ENCODE measurements at regions of chr17 and their contacts with region 1.

Region 1: GRCh38 chr17:77957857-77958715 is at the start of gene TNRC6C:
- DNase-seq: peak; percentile 100
- ATAC-seq: peak; percentile 92
- H3K4me3 Mint-ChIP-seq: peak within 1 kb of the TSS; percentile 92
- H3K27ac Mint-ChIP-seq: peak within 1 kb of the TSS; percentile 95
- H3K4me1 Mint-ChIP-seq: peaks cover 34% of the 10 kb centered on the region
- H3K27me3 Mint-ChIP-seq: peaks cover 4% of the 10 kb centered on the region
- total RNA-seq, gene TNRC6C: 19.6 to 20.3 TPM

Region 2: DNA sequence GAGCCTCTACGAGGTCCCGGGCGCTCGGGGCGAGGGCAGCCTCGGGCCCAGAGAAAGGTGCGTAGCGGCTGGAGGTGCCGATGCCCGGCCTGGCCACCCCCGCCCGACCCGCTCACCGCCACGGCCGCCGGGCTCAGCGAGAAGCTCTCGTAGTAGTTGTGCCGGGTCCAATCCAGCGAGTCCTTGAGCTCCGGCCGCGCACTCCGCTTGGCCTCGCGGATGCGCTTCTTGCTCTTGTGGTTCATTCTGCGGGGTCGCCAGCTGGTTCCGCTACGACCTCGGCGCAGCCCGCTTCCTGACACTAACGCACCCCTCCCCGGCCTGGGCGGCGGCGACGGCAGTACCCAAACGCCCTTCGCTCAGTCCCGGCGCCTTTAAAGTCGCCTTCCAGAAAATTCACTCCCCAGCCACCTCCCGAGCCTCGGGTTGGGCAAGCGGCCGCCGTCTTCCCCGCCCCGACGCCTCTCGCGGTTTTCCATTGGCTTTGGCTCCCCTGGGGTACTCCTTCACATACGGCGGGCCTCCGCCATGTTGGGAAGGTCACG is 1231.8 kb before region 1 on chr17 and contains the start of gene JMJD6:
- CTCF ChIA-PET with region 1: no interaction called
- POLR2A ChIA-PET with region 1: no interaction called
- intact Hi-C with region 1: loop called in 1 of 2 experiments (anchors 2 kb)
- DNase-seq: peak; percentile 97
- ATAC-seq: peak; percentile 87
- H3K4me3 Mint-ChIP-seq: peak within 1 kb of the TSS; percentile 97
- H3K27ac Mint-ChIP-seq: peak within 1 kb of the TSS; percentile 98
- H3K4me1 Mint-ChIP-seq: peaks cover 54% of the 10 kb centered on the region
- H3K27me3 Mint-ChIP-seq: no peaks in the 10 kb centered on the region
- total RNA-seq, gene JMJD6: 51.3 to 65.5 TPM

Region 3: DNA sequence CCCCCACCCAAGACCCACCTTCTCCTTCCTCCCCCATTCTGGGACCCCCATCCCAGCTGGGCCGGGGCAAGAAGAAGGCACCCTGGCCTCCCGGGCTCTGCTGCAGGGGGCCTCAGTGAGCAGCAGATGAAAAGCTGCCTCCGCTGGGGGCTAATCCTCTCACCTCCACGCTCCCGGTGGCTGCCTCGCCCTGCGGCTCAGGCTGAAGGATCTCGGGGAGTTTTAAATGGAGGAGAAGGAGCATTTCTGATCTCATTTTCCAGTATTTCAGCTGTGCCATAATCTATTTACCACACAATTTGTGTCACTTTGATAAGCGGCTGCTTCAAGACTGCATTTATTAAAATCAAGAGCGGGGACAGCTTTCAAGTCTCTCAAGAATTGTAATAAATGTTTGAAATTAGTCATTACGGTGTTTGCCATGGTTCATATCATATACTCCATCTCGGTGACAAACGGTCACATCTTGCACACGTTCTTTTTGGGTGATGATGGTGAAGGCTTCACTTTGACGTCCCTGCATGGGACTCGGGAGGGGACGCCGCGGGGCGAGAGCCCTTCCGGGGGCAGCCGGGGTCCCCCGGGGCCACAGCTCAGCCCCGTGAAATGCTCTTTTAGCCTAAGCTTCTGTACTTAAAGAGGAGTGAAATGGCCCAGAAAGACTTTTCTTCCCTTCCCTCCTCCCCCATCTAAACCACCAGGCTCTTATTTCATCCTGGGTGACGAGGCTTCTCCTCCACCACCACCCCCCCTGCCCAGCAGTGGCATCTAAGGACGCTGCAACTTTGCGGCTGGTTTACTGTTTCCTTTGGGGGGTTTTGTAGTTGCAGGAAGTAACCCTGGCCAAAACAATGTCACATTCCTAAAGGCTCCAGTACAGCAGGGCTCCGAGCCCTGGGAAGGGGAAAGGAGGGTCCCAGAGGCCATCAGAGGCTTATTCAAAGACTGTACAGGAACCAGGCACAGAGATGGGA is 312.7 kb before region 1 on chr17:
- CTCF ChIA-PET with region 1: no interaction called
- POLR2A ChIA-PET with region 1: interaction called, 3 read pairs
- intact Hi-C with region 1: loop called in 1 of 2 experiments (anchors 1 kb)
- DNase-seq: peak; percentile 81
- ATAC-seq: peak; percentile 85
- H3K4me3 Mint-ChIP-seq: peak overlapping the region; percentile 59
- H3K27ac Mint-ChIP-seq: peak overlapping the region; percentile 92
- H3K4me1 Mint-ChIP-seq: peaks cover 20% of the 10 kb centered on the region
- H3K27me3 Mint-ChIP-seq: peaks cover 4% of the 10 kb centered on the region

Region 4: GRCh38 chr17:77834170-77835115 is 123.6 kb before region 1 on chr17:
- CTCF ChIA-PET with region 1: no interaction called
- POLR2A ChIA-PET with region 1: interaction called, 5 read pairs
- intact Hi-C with region 1: loop called in 1 of 2 experiments (anchors 1 kb)
- DNase-seq: peak; percentile 88
- ATAC-seq: peak; percentile 79
- H3K4me3 Mint-ChIP-seq: no peak overlapping the region
- H3K27ac Mint-ChIP-seq: peak overlapping the region; percentile 3
- H3K4me1 Mint-ChIP-seq: peaks cover 51% of the 10 kb centered on the region
- H3K27me3 Mint-ChIP-seq: peaks cover 3% of the 10 kb centered on the region

Region 5: DNA sequence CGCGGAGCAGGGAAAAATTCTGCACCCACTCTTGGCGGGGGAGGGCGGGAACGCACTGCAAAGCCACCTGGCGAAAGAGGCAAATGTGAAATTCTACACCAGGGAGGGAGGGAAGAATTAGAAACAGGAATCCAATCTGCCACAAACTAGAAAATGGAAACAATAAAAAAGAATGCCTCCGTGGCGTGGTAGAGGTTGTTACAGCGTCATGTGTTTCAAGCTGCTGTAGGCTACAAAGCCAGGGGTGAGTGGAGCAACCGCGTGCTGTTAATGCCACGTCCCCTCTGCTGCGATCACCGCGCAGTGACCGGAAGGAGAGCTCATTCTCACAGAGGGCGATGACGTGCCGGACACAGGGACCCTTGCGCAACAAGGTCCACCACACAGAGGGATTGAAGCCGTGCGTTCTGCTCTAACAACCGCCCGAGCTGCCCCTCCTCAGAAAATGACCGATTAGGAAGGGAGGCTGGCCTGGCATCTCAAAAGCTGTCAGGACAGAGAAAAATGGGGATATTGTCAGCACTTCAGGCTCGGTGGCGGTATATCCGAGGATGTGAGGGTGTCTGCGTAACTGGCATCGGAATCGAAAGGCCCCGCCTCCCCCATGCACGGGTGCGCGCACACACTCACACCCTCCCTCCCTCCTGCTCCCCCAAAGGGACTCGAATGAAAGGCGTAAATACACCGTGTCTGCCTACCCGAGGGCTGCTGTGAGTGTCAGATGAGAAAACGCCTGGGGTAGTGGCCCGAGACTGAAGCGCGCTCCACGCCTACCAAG is 70.4 kb before region 1 on chr17:
- CTCF ChIA-PET with region 1: interaction called, 3 read pairs
- POLR2A ChIA-PET with region 1: interaction called, 4 read pairs
- intact Hi-C with region 1: loop called (anchors 1 to 2 kb)
- DNase-seq: peak; percentile 78
- ATAC-seq: peak; percentile 82
- H3K4me3 Mint-ChIP-seq: peak overlapping the region; percentile 70
- H3K27ac Mint-ChIP-seq: peak overlapping the region; percentile 40
- H3K4me1 Mint-ChIP-seq: peaks cover 49% of the 10 kb centered on the region
- H3K27me3 Mint-ChIP-seq: peaks cover 3% of the 10 kb centered on the region

Region 6: DNA sequence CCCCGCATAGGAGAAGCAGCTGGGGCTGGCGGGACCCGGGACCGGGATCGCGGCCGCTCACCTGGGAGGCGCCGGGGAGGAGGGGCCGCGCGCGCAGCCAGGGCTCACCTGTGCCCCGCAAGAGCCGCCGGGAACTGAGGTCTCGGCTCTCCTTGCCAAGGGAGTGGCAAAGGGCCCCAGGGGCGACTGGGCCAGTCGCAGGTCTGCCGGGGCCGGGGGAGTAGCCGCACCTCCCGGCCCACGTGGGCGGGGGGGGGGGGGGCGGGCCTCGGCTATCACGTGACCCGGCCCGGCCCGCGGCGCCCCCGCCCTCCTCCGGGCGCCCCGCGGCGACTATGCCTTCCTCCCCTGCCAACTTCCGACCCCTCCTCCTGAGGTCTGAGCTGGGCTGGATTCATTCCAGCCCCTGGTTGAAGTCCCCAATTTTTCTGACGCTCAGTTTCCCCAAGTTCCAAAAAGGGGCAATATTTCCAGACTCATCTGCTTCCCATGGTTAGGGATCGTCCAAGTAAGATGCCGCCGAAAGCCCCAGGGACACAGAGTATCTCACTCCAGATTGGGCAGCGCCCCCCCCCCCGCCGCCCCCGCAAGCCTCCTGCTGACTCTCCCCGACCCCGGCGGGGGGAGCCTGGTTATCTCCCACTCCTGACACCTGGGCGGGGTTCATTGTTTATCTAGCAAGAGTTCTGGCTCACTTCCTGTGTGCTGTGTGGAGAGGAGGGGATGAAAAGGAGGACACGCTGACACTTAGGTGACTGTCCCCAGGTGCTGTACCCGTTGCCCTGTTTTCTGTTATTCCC is 170.7 kb after region 1 on chr17 and contains the start of gene TMC6:
- CTCF ChIA-PET with region 1: no interaction called
- POLR2A ChIA-PET with region 1: no interaction called
- intact Hi-C with region 1: loop called in 1 of 2 experiments (anchors 1 kb)
- DNase-seq: peak; percentile 87
- ATAC-seq: peak; percentile 31
- H3K4me3 Mint-ChIP-seq: peak within 1 kb of the TSS; percentile 94
- H3K27ac Mint-ChIP-seq: peak within 1 kb of the TSS; percentile 96
- H3K4me1 Mint-ChIP-seq: peaks cover 52% of the 10 kb centered on the region
- H3K27me3 Mint-ChIP-seq: no peaks in the 10 kb centered on the region
- total RNA-seq, gene TMC6: 138 to 145 TPM

Region 7: GRCh38 chr17:78329263-78330059 is 371.4 kb after region 1 on chr17:
- CTCF ChIA-PET with region 1: no interaction called
- POLR2A ChIA-PET with region 1: no interaction called
- intact Hi-C with region 1: no loop called
- DNase-seq: peak; percentile 46
- ATAC-seq: peak; percentile 36
- H3K4me3 Mint-ChIP-seq: no peak overlapping the region
- H3K27ac Mint-ChIP-seq: peak overlapping the region; percentile 19
- H3K4me1 Mint-ChIP-seq: peaks cover 35% of the 10 kb centered on the region
- H3K27me3 Mint-ChIP-seq: no peaks in the 10 kb centered on the region